ENCODE measurements at regions of chr6 and their contacts with region 1.

Region 1: DNA sequence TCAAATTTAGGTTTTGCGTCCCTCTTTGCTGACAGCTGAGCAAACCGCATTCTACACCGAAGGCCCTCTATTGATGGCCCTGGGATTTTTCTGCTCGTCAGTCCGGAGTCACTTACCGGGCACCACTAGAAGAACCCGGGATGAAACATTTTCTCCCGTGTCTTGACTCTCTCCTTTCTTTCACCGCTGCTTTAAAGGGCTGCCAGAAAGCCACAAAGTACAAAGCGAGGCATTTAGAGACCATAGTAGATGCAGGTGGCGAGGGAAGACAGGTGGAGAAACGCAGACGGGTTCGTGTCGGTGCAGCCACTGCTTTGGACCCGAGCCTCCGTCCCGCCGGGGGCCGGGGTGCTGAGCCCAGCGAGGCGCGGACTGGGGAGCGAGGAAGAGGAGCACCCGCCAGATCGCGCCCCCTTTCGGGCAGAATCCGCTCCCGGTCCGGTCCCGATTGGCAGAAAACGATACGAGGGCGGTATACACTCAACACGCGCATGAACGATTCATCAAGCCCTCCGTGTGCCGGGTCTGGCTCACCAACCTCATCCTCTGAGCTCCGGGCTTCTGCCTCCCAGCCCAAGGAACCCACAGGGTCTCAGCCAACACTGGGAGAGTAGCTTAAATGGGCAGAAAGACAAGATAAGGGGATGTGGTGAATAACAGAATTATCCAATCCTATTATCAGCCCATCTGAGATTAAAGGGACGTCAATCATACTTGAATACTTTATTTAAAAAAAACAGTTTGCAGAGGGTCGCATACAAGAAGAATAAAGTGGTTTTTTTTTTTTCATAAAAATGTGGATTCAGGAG is 84.9 kb downstream of the TRIM27 start:
- DNase-seq: peak; percentile 89
- ATAC-seq: peak; percentile 83
- H3K4me3 ChIP-seq: peak overlapping the region; percentile 80
- H3K27ac ChIP-seq: no peak overlapping the region
- H3K4me1 ChIP-seq: peaks cover 6% of the 10 kb centered on the region; the same call in 1 of the 2 replicates
- H3K27me3 ChIP-seq: no peaks in the 10 kb centered on the region
- CTCF ChIP-seq: peak; percentile 79

Region 2: GRCh38 chr6:28542440-28543296 is 296.2 kb before region 1 on chr6:
- CTCF ChIA-PET with region 1: no interaction called
- POLR2A ChIA-PET with region 1: no interaction called
- intact Hi-C with region 1: loop called (anchors 5 kb)
- DNase-seq: peak; percentile 95
- ATAC-seq: peak; percentile 91
- H3K4me3 ChIP-seq: peak overlapping the region; percentile 70
- H3K27ac ChIP-seq: no peak overlapping the region
- H3K4me1 ChIP-seq: peaks cover 7% of the 10 kb centered on the region; the same call in 1 of the 2 replicates
- H3K27me3 ChIP-seq: peaks cover 24% of the 10 kb centered on the region
- CTCF ChIP-seq: peak; percentile 85

Region 3: GRCh38 chr6:28863604-28864320 is 24.9 kb after region 1 on chr6:
- CTCF ChIA-PET with region 1: interaction called, 6 read pairs
- POLR2A ChIA-PET with region 1: no interaction called
- intact Hi-C with region 1: loop called (anchors 1 kb)
- DNase-seq: peak; percentile 91
- ATAC-seq: peak; percentile 61
- H3K4me3 ChIP-seq: peak overlapping the region; percentile 87
- H3K27ac ChIP-seq: peak overlapping the region; percentile 22; the same call in 1 of the 2 replicates
- H3K4me1 ChIP-seq: peaks cover 29% of the 10 kb centered on the region
- H3K27me3 ChIP-seq: no peaks in the 10 kb centered on the region
- CTCF ChIP-seq: no peak

Region 4: DNA sequence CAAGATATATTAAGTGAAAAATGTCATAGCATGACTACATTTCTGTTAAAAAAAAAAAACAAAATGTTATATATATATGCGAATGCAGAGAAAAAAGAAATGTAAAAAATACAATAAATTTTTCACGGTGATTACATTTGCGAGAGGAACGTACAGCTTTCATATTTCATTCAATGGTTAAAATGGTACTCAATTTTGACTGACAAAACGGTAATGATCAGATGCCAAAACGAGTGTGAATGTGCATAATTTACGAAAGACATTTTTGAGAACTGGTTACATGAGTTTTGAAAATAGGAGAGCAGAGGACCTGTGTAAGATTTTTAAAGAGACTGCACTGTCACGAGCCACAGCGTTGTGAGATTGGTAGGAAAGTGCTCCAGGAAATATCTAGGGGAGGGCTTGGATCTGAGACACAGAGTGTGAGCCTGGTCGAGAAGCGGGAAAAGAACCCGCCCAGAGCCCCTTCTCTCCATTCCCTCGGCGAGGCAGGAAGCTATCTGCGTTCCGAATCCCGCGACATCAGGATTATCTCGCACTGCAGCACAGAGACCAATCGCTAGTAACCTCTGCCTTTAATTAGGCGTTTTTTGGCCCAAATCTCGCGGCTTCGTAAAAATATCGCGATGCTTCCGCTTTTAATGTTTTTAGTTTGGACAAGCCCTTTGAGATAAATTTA is 56.4 kb after region 1 on chr6:
- CTCF ChIA-PET with region 1: interaction called, 17 read pairs
- POLR2A ChIA-PET with region 1: no interaction called
- intact Hi-C with region 1: loop called (anchors 1 kb)
- DNase-seq: peak; percentile 98
- ATAC-seq: peak; percentile 62
- H3K4me3 ChIP-seq: peak overlapping the region; percentile 83
- H3K27ac ChIP-seq: peak overlapping the region; percentile 80
- H3K4me1 ChIP-seq: peaks cover 10% of the 10 kb centered on the region
- H3K27me3 ChIP-seq: no peaks in the 10 kb centered on the region
- CTCF ChIP-seq: no peak

Region 5: GRCh38 chr6:28940858-28941680 is 102.2 kb after region 1 on chr6:
- CTCF ChIA-PET with region 1: interaction called, 3 read pairs
- POLR2A ChIA-PET with region 1: no interaction called
- intact Hi-C with region 1: loop called (anchors 1 kb)
- DNase-seq: peak; percentile 96
- ATAC-seq: peak; percentile 69
- H3K4me3 ChIP-seq: peak overlapping the region; percentile 95
- H3K27ac ChIP-seq: peak overlapping the region; percentile 60
- H3K4me1 ChIP-seq: peaks cover 4% of the 10 kb centered on the region; the same call in 1 of the 2 replicates
- H3K27me3 ChIP-seq: no peaks in the 10 kb centered on the region
- CTCF ChIP-seq: no peak

Region 6: GRCh38 chr6:28981833-28982475 is 143.1 kb after region 1 on chr6:
- CTCF ChIA-PET with region 1: interaction called, 4 read pairs
- POLR2A ChIA-PET with region 1: no interaction called
- intact Hi-C with region 1: loop called (anchors 1 kb)
- DNase-seq: peak; percentile 82
- ATAC-seq: peak; percentile 27
- H3K4me3 ChIP-seq: peak overlapping the region; percentile 92
- H3K27ac ChIP-seq: peak overlapping the region; percentile 11; the same call in 1 of the 2 replicates
- H3K4me1 ChIP-seq: peaks cover 39% of the 10 kb centered on the region
- H3K27me3 ChIP-seq: no peaks in the 10 kb centered on the region
- CTCF ChIP-seq: no peak

Region 7: DNA sequence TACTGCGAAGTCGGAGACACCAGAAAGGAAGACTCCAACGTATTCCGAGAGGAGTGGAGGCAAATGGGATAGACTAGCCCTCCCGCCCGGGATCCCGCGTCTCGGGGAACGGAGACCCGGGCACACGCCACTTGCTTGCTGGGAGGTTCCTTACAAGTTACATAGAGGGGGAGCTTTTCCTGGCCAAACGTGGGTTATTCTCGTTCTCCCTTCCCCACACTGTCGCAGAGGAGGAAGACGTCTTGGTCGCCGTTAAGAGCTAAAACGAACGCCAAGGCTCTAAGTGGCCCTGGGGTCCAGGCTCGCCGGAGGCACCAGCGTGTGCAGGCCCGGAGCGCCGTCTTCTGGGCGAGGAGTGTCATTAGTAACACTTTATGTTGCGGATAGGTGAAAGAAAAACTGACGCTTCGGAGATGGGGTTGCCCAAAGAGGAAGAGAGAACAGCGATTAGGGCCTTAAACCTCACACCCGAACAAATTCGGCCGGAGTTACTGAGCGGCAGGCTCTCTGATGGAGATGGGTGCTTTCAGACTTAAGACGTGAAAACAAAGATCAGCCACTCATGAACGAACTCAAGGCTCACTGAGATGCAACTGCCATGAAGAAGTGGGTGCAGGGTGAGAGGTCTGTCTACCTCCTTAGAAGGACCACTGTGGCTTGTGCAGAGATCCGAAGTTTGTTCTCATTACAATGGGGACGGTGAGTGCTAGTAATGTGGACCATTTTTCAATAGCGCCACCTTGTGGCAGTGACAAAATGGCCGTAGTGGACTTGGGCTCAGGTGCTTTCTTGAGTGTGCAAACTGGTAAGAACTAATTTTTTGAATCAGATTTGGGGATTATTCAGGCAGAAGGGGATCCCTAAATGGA is 178.0 kb after region 1 on chr6:
- CTCF ChIA-PET with region 1: interaction called, 9 read pairs
- POLR2A ChIA-PET with region 1: no interaction called
- intact Hi-C with region 1: loop called (anchors 1 kb)
- DNase-seq: peak; percentile 91
- ATAC-seq: peak; percentile 90
- H3K4me3 ChIP-seq: peak overlapping the region; percentile 94
- H3K27ac ChIP-seq: no peak overlapping the region
- H3K4me1 ChIP-seq: no peaks in the 10 kb centered on the region
- H3K27me3 ChIP-seq: no peaks in the 10 kb centered on the region
- CTCF ChIP-seq: peak; percentile 96

Region 8: DNA sequence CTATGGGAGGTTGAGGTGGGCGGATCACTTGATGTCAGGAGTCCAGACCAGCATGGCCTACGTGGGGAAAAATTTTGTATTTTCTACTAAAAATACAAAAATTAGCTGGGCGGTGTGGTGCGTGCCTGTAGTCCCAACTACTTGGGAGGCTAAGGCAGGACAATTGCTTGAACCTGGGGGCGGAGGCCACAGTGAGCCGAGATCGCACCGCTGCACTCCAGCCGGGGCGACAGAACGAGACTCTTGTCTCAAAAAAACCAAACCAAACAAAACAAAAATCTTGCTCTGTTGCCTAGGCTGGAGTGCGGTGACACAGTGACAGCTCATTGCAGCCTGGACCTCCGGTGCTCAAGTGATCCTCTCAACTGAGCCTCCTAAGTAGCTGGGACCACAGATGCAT is 190.0 kb after region 1 on chr6:
- CTCF ChIA-PET with region 1: no interaction called
- POLR2A ChIA-PET with region 1: no interaction called
- intact Hi-C with region 1: no loop called
- DNase-seq: no peak
- ATAC-seq: no peak
- H3K4me3 ChIP-seq: no peak overlapping the region
- H3K27ac ChIP-seq: no peak overlapping the region
- H3K4me1 ChIP-seq: no peaks in the 10 kb centered on the region
- H3K27me3 ChIP-seq: peaks cover 15% of the 10 kb centered on the region; the same call in 1 of the 2 replicates
- CTCF ChIP-seq: no peak

Measured in PC-3 (cell line).